Right cardiac atrium (tissue), 5 donors: ENCODE measurements at regions of chr6 and their contacts with region 1.

Region 1: DNA sequence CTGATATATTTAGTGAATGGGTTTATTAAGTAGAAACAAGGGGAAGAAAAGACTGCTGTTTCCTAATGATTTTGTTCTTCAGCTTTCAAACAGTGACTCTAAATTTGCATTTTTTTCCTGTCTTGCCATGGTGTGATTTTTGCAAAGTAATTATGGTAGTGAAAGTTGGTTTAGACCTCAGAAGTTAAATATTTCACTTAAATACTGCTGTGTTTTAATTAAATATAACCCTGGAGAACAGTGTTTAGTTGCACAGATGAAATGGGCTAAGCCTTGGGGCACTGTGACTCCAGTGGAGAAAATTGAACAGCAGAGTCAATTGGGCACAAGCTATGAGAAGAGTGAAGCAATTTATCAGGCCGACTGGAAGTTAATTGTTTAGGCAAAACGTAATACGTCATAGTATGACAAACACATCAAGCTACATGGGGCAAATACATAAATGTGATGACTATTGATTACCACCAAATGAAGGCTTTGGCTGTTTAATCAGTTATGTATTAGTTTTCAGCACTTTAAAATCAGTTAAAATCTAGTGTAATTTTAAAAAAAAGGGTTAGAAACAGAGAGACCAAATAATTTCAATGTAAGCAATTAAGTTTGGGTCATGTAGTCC is 111.2 kb upstream of the MCHR2 start:
- DNase-seq: no peak
- ATAC-seq: no peak
- H3K4me3 ChIP-seq: no peak overlapping the region
- H3K27ac ChIP-seq: no peak overlapping the region
- H3K4me1 ChIP-seq: no peaks in the 10 kb centered on the region
- H3K27me3 ChIP-seq: no peaks in the 10 kb centered on the region

Region 2: DNA sequence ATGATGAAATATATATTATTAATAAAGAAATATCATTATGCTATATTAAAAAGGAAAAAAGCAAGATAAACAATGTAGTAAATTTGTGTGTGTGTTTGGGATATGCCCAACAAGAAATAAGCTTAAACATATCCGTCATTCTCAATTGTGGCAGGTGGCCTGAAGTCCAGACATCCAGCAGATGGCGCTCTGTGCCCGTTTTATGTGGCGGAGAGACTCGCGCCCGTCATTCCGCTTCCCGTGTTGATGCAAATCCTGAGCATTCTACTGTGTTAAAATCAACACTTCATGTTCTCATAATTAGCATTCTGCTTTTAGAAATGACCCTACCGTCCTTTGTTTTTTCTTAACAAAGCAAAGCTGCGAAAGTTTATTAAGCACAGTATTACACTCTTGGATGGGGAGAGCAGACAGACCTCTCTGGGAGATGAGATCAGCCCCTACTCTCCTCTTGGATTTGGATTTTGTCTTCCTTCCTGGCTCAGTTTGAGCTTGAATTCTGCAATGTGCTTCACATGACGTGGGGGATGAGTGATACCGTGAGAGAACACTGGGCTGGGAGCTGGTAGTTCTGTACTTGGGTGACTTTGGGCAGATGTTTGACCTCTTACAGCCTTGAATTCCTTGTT is 237.1 kb before region 1 on chr6:
- intact Hi-C with region 1: loop called in 2 of 4 experiments (anchors 5 kb)
- DNase-seq: peak; percentile 72 to 89 (median 85)
- ATAC-seq: peak; percentile 41 to 70
- H3K4me3 ChIP-seq: no peak overlapping the region
- H3K27ac ChIP-seq: no peak overlapping the region
- H3K4me1 ChIP-seq: no peaks in the 10 kb centered on the region
- H3K27me3 ChIP-seq: no peaks in the 10 kb centered on the region

Region 3: GRCh38 chr6:100160912-100161311 is 55.7 kb after region 1 on chr6:
- intact Hi-C with region 1: no loop called
- DNase-seq: no peak
- ATAC-seq: no peak
- H3K4me3 ChIP-seq: no peak overlapping the region
- H3K27ac ChIP-seq: no peak overlapping the region
- H3K4me1 ChIP-seq: no peaks in the 10 kb centered on the region
- H3K27me3 ChIP-seq: no peaks in the 10 kb centered on the region